GM13976 (cell line): ENCODE measurements at regions of chr12 and their contacts with region 1.

Region 1: GRCh38 chr12:40921563-40922163 is 229.4 kb downstream of the CNTN1 start:
- DNase-seq: no peak
- CTCF ChIP-seq: no peak

Region 2: GRCh38 chr12:40325349-40325960 is 596.2 kb before region 1 on chr12:
- in situ Hi-C with region 1: loop called (anchors 25 kb)
- DNase-seq: peak; percentile 65
- CTCF ChIP-seq: peak; percentile 53

Region 3: DNA sequence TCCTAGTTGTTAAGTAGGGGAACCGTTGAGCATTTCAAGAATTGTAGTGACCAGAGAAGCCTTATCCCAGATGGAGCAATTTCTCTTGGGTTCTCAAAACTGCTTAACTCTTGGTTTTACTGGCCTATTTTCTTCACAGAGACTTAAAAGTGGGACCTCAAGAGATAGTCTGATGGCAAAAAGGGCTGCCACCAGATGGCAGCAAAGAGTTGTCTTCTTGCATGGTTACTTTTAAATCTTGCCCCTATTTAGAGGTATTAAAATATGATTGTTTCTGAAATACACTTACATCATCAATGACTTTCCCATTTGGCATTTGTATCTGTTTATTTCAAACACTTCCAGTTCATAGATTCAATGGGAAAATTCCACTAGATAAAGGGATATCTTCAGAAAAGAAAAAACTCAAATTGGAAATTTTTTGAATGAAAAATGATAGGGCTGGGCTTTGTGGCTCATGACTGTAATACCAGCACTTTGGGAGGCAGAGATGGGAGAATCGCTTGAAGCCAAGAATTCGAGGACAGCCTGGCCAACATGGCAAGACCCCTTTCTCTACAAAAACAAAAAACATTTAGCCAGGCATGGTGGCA is 299.3 kb before region 1 on chr12:
- in situ Hi-C with region 1: loop called (anchors 10 kb)
- DNase-seq: peak; percentile 60
- CTCF ChIP-seq: peak; percentile 65

Region 4: DNA sequence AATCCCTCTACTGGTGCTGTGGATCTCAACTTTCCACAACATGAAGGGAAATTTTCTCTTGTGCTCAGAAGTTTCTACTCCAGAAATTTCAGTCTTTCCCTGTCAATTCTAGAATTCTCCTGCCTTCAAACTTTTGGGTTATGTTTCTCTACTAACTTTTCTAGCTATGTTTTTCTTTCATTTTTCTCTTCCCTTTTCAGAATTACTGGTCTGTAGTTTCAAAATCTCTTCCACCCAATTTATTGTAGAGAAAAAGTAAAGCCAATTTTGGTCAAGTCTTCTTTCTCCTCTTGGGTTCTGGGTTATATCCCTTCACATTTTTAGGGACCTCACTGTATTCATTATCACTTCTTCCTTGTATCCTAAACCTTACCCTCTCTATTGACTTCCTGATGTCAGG is 210.5 kb before region 1 on chr12:
- in situ Hi-C with region 1: no loop called
- DNase-seq: no peak
- CTCF ChIP-seq: no peak